GM12878 (cell line): ENCODE measurements at regions of chr18 and their contacts with region 1.

Region 1: GRCh38 chr18:35616664-35617423 is 35.3 kb downstream of the GALNT1 start:
- DNase-seq: peak; percentile 88
- ATAC-seq: peak; percentile 97
- H3K4me3 ChIP-seq: peak overlapping the region; percentile 38; the same call in 1 of the 2 replicates
- H3K27ac ChIP-seq: peak overlapping the region; percentile 54
- H3K4me1 ChIP-seq: peaks cover 15% of the 10 kb centered on the region
- H3K27me3 ChIP-seq: no peaks in the 10 kb centered on the region
- CTCF ChIP-seq: no peak
- EP300 ChIP-seq: peak; percentile 80 to 92; a peak in 3 of 4 replicates
- POLR2A ChIP-seq: no peak
- RAD21 ChIP-seq: peak; percentile 25; the same call in 1 of the 2 replicates

Region 2: DNA sequence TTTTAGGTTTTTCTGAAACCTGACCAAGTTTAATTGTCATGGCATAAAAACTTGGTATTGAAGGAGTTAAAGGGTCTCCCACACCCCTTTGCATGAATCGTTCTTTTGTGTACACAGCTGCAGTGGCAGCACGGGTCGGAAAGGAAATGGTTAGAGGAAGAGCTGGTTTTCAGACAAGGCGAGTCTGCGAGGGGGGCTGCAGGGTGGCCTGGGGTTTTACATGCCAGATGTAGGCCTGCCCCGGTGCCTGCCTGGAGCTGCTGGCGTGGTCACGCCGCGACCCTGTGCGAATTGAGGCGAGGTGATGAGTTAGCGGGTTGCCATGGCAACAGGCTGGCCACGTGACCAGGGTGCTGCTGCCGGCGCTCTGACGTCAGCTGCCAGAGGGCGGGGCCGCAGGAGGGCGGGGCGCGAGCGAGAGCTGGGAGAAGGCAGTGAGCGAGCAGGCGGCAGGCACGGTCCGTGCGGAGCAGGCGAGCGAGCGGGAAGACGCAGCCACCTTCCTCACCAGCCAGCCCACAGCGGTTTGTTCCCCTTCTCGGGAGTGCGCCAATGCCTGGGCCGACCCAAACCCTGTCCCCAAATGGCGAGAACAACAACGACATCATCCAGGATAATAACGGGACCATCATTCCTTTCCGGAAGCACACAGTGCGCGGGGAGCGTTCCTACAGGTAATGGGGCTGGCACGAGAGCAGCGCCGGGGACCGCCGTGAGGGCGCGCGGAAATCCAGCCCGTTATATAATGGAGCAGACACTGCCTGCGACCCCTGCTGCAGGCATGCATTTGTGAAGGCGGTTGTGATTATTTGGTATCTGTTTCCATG is 575.6 kb before region 1 on chr18 and contains the start of gene MAPRE2:
- CTCF ChIA-PET with region 1: no interaction called
- POLR2A ChIA-PET with region 1: no interaction called
- RAD21 ChIA-PET with region 1: no interaction called
- SMC1A ChIA-PET with region 1: no interaction called
- in situ Hi-C with region 1: no loop called
- intact Hi-C with region 1: loop called (anchors 10 kb)
- DNase-seq: peak; percentile 82
- ATAC-seq: peak; percentile 84
- H3K4me3 ChIP-seq: peak within 1 kb of the TSS; percentile 78
- H3K27ac ChIP-seq: peak within 1 kb of the TSS; percentile 66
- H3K4me1 ChIP-seq: peaks cover 12% of the 10 kb centered on the region; the same call in 1 of the 2 replicates
- H3K27me3 ChIP-seq: no peaks in the 10 kb centered on the region
- CTCF ChIP-seq: no peak
- EP300 ChIP-seq: peak in 1 of 2 experiments; percentile 43; a peak in 2 of 4 replicates
- POLR2A ChIP-seq: peak; percentile 99
- RAD21 ChIP-seq: no peak
- polyA plus RNA-seq, gene MAPRE2: 11.0 to 16.3 TPM

Region 3: GRCh38 chr18:35143622-35144596 is 472.9 kb before region 1 on chr18:
- CTCF ChIA-PET with region 1: no interaction called
- POLR2A ChIA-PET with region 1: no interaction called
- RAD21 ChIA-PET with region 1: no interaction called
- SMC1A ChIA-PET with region 1: no interaction called
- in situ Hi-C with region 1: no loop called
- intact Hi-C with region 1: no loop called
- DNase-seq: no peak
- ATAC-seq: peak; percentile 97
- H3K4me3 ChIP-seq: no peak overlapping the region
- H3K27ac ChIP-seq: no peak overlapping the region
- H3K4me1 ChIP-seq: peaks cover 4% of the 10 kb centered on the region
- H3K27me3 ChIP-seq: no peaks in the 10 kb centered on the region
- CTCF ChIP-seq: peak; percentile 49 to 77 (median 74)
- EP300 ChIP-seq: no peak
- POLR2A ChIP-seq: no peak
- RAD21 ChIP-seq: peak; percentile 69

Region 4: DNA sequence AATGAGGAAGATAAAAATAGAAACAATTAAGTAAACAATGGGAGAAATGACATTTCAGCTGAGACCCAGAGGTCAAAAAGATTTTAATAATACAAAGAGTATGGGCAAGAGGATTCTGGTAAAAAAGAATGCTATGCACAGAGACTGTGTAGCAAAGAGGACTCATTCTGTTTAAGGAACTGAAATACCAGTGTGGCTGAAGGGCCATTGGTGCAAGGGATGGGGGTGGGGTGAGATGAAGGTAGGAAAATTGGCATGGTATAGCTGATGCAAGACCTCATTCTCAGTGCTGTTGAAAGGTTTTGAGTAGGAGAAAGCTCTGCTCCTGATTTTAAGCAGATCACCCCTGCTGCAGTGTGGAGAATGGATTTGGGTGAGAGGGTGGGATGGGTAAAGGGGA is 24.5 kb before region 1 on chr18:
- CTCF ChIA-PET with region 1: interaction called, 5 read pairs
- POLR2A ChIA-PET with region 1: interaction called, 6 read pairs
- RAD21 ChIA-PET with region 1: interaction called, 7 read pairs
- SMC1A ChIA-PET with region 1: interaction called, 21 read pairs
- in situ Hi-C with region 1: no loop called
- intact Hi-C with region 1: loop called (anchors 2 kb)
- DNase-seq: peak; percentile 75
- ATAC-seq: peak; percentile 98
- H3K4me3 ChIP-seq: no peak overlapping the region
- H3K27ac ChIP-seq: peak overlapping the region; percentile 56
- H3K4me1 ChIP-seq: peaks cover 23% of the 10 kb centered on the region
- H3K27me3 ChIP-seq: no peaks in the 10 kb centered on the region
- CTCF ChIP-seq: no peak
- EP300 ChIP-seq: peak in 1 of 2 experiments; percentile 75; a peak in 2 of 4 replicates
- POLR2A ChIP-seq: no peak
- RAD21 ChIP-seq: no peak

Region 5: GRCh38 chr18:35661483-35662146 is 44.8 kb after region 1 on chr18:
- CTCF ChIA-PET with region 1: no interaction called
- POLR2A ChIA-PET with region 1: no interaction called
- RAD21 ChIA-PET with region 1: no interaction called
- SMC1A ChIA-PET with region 1: interaction called, 3 read pairs
- in situ Hi-C with region 1: loop called (anchors 5 kb)
- intact Hi-C with region 1: no loop called
- DNase-seq: no peak
- ATAC-seq: peak; percentile 71
- H3K4me3 ChIP-seq: no peak overlapping the region
- H3K27ac ChIP-seq: peak overlapping the region; percentile 28; the same call in 1 of the 2 replicates
- H3K4me1 ChIP-seq: peaks cover 7% of the 10 kb centered on the region; the same call in 1 of the 2 replicates
- H3K27me3 ChIP-seq: no peaks in the 10 kb centered on the region
- CTCF ChIP-seq: peak in 1 of 3 experiments; percentile 30; a peak in 1 of 6 replicates
- EP300 ChIP-seq: no peak
- POLR2A ChIP-seq: no peak
- RAD21 ChIP-seq: 0 out of 2 replicates have a peak, but pooled peaks have one; percentile 33